Naive thymus-derived CD4-positive, alpha-beta T cell (primary cell): ENCODE measurements at regions of chr11 and their contacts with region 1.

Region 1: GRCh38 chr11:122796128-122796717 is 42.1 kb upstream of the CRTAM start:
- DNase-seq: peak; percentile 36 to 72 (median 64)
- ATAC-seq: peak; percentile 95
- H3K4me3 ChIP-seq: no peak overlapping the region
- H3K4me3 Mint-ChIP-seq: no peak overlapping the region
- H3K27ac ChIP-seq: no peak overlapping the region
- H3K27ac Mint-ChIP-seq: peak overlapping the region in 2 of 9 donors; percentile 41 to 42
- H3K4me1 ChIP-seq: no peaks in the 10 kb centered on the region
- H3K4me1 Mint-ChIP-seq: peaks cover 0 to 5% (median 0%) of the 10 kb centered on the region in 7 donors
- H3K27me3 ChIP-seq: no peaks in the 10 kb centered on the region
- H3K27me3 Mint-ChIP-seq: no peaks in the 10 kb centered on the region

Region 2: GRCh38 chr11:122584670-122585069 is 211.6 kb before region 1 on chr11:
- CTCF ChIA-PET with region 1: no interaction called
- POLR2A ChIA-PET with region 1: no interaction called
- intact Hi-C with region 1: loop called in 1 of 2 experiments (anchors 5 kb)
- DNase-seq: no peak
- ATAC-seq: no peak
- H3K4me3 ChIP-seq: no peak overlapping the region
- H3K4me3 Mint-ChIP-seq: no peak overlapping the region
- H3K27ac ChIP-seq: no peak overlapping the region
- H3K27ac Mint-ChIP-seq: no peak overlapping the region
- H3K4me1 ChIP-seq: no peaks in the 10 kb centered on the region
- H3K4me1 Mint-ChIP-seq: peaks cover 5 to 17% (median 11%) of the 10 kb centered on the region in 7 donors
- H3K27me3 ChIP-seq: no peaks in the 10 kb centered on the region
- H3K27me3 Mint-ChIP-seq: peaks cover 0 to 12% (median 5%) of the 10 kb centered on the region in 5 donors

Region 3: DNA sequence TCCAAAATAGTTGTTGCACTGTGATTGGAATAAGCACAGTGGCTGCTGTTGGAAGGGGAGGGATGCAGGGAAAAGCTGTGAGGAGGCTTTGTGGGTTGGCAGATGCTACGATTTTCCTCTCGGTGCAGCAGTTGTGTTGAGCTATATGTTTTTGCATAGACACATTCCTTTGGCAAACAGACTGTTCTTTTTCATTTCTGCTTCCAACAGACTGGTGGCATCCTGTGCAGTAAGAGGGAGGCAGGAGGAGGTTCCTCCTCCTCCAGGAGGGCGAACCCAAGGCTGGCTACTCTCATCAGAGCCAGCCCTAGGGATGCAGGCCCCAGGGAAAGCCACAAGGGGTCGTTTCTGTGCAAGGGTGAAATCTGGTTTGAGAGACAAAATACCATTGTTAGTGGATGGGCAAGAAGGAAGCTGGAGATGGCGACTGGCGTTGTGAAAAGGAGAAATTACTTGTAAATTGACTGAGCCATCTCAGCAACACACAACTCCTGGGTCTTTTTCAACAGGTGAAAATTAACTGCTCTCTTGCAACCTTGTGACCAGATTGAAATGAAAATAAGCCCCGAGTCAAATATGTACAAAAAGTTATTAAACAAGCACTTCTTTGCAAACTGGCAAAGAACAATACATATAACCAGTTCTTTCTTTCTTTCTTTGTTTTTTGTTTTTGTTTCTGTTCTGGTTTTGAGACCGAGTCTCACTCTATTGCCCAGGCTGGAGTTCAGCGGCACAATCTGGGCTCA is 167.2 kb before region 1 on chr11:
- CTCF ChIA-PET with region 1: interaction called, 3 read pairs
- POLR2A ChIA-PET with region 1: no interaction called
- intact Hi-C with region 1: loop called in 1 of 2 experiments (anchors 1 kb)
- DNase-seq: peak; percentile 46 to 70 (median 62)
- ATAC-seq: peak; percentile 93
- H3K4me3 ChIP-seq: no peak overlapping the region
- H3K4me3 Mint-ChIP-seq: no peak overlapping the region
- H3K27ac ChIP-seq: no peak overlapping the region
- H3K27ac Mint-ChIP-seq: peak overlapping the region in 4 of 9 donors; percentile 18 to 49 (median 24)
- H3K4me1 ChIP-seq: no peaks in the 10 kb centered on the region
- H3K4me1 Mint-ChIP-seq: peaks cover 0 to 30% (median 16%) of the 10 kb centered on the region in 7 donors
- H3K27me3 ChIP-seq: no peaks in the 10 kb centered on the region
- H3K27me3 Mint-ChIP-seq: peaks cover 0 to 16% (median 0%) of the 10 kb centered on the region in 5 donors

Region 4: GRCh38 chr11:122808478-122808869 is 12.3 kb after region 1 on chr11:
- CTCF ChIA-PET with region 1: interaction called, 24 read pairs
- POLR2A ChIA-PET with region 1: interaction called, 4 read pairs
- intact Hi-C with region 1: no loop called
- DNase-seq: peak in 1 of 9 donors; percentile 30
- ATAC-seq: no peak
- H3K4me3 ChIP-seq: no peak overlapping the region
- H3K4me3 Mint-ChIP-seq: peak overlapping the region in 3 of 10 donors; percentile 31 to 46 (median 46)
- H3K27ac ChIP-seq: no peak overlapping the region
- H3K27ac Mint-ChIP-seq: peak overlapping the region in 8 of 9 donors; percentile 19 to 82 (median 70)
- H3K4me1 ChIP-seq: peaks cover 0 to 14% of the 10 kb centered on the region in 2 donors
- H3K4me1 Mint-ChIP-seq: peaks cover 22 to 60% (median 41%) of the 10 kb centered on the region in 7 donors
- H3K27me3 ChIP-seq: no peaks in the 10 kb centered on the region
- H3K27me3 Mint-ChIP-seq: no peaks in the 10 kb centered on the region

Region 5: DNA sequence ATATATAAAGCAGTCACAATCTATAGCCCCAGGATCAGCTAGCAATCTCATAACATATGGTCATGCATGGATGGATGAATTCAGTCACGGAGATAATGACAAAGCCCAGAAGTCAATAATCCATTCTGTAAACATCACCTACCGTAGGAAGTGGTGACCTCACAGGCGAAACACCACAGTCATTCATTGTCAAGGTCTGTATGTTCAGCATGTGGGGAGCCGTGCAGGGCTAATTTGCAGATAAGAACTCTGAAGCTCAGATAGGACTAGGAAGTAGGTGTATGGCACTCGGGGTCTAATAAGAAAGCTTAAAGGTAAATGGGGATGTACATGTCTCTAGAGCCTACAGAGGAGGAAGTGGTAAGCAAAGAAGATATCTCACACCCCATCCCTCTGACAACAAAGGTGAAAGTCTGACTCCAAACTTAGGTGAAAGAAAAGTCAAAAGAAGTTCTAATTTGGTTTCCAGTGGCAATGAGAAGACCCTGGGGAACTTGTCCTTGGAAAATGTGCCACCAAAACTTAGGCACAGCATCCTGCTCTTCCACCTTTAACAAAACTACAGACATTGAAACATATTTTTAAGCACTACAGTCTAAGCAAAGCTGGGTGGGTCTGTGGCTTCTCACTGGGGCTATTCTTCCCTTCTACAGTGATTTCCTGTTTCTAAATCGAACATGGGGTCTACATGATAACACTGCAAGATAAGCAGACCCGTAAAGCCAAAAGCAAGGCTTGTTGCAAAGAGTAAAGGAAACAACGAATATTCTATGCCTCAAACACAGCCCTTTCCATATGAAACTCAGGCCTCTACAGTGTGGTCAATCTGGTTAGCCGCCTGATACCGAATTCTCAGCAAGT is 47.3 kb after region 1 on chr11:
- CTCF ChIA-PET with region 1: interaction called, 10 read pairs
- POLR2A ChIA-PET with region 1: interaction called, 5 read pairs
- intact Hi-C with region 1: no loop called
- DNase-seq: peak in 7 of 9 donors; percentile 48 to 69 (median 55)
- ATAC-seq: peak; percentile 92
- H3K4me3 ChIP-seq: peak overlapping the region; percentile 32
- H3K4me3 Mint-ChIP-seq: peak overlapping the region; percentile 38 to 82 (median 70)
- H3K27ac ChIP-seq: peak overlapping the region; percentile 59
- H3K27ac Mint-ChIP-seq: peak overlapping the region; percentile 84 to 97 (median 90)
- H3K4me1 ChIP-seq: peaks cover 30 to 73% of the 10 kb centered on the region in 2 donors
- H3K4me1 Mint-ChIP-seq: peaks cover 24 to 57% (median 48%) of the 10 kb centered on the region in 7 donors
- H3K27me3 ChIP-seq: no peaks in the 10 kb centered on the region
- H3K27me3 Mint-ChIP-seq: peaks cover 0 to 5% (median 0%) of the 10 kb centered on the region in 5 donors

Region 6: DNA sequence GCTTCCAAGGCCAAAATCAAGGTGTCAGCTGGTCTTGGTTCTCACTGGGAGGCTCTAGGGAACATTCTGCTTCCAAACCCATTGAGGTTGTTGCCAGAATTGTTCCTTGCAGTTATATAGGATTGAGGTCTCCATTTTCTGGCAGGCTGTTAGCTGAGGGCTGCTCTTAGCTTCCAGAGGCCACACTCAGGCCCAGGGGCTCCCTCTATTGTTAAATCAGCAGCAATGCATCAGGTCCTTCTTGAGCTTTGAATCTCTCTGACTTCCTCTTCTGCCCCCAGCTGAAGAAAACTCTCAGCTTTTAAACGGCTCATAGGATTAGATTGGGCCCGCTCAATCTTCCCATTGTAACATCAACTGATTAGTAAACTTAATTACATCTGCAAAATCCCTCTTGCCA is 224.7 kb after region 1 on chr11:
- CTCF ChIA-PET with region 1: interaction called, 7 read pairs
- POLR2A ChIA-PET with region 1: no interaction called
- intact Hi-C with region 1: loop called (anchors 1 to 5 kb)
- DNase-seq: peak in 5 of 9 donors; percentile 31 to 50 (median 37)
- ATAC-seq: peak; percentile 81
- H3K4me3 ChIP-seq: no peak overlapping the region
- H3K4me3 Mint-ChIP-seq: no peak overlapping the region
- H3K27ac ChIP-seq: no peak overlapping the region
- H3K27ac Mint-ChIP-seq: no peak overlapping the region
- H3K4me1 ChIP-seq: peaks cover 0 to 10% of the 10 kb centered on the region in 2 donors
- H3K4me1 Mint-ChIP-seq: peaks cover 6 to 14% (median 7%) of the 10 kb centered on the region in 7 donors
- H3K27me3 ChIP-seq: no peaks in the 10 kb centered on the region
- H3K27me3 Mint-ChIP-seq: peaks cover 6 to 25% (median 8%) of the 10 kb centered on the region in 5 donors

Region 7: GRCh38 chr11:123054301-123055065 is 258.3 kb after region 1 on chr11:
- CTCF ChIA-PET with region 1: interaction called, 4 read pairs
- POLR2A ChIA-PET with region 1: no interaction called
- intact Hi-C with region 1: loop called in 1 of 2 experiments (anchors 1 kb)
- DNase-seq: peak in 7 of 9 donors; percentile 52 to 75 (median 67)
- ATAC-seq: peak; percentile 87
- H3K4me3 ChIP-seq: peak overlapping the region; percentile 11
- H3K4me3 Mint-ChIP-seq: peak overlapping the region in 9 of 10 donors; percentile 20 to 100 (median 65)
- H3K27ac ChIP-seq: peak overlapping the region; percentile 38
- H3K27ac Mint-ChIP-seq: peak overlapping the region; percentile 69 to 100 (median 92)
- H3K4me1 ChIP-seq: peaks cover 50 to 56% of the 10 kb centered on the region in 2 donors
- H3K4me1 Mint-ChIP-seq: peaks cover 42 to 60% (median 55%) of the 10 kb centered on the region in 7 donors
- H3K27me3 ChIP-seq: no peaks in the 10 kb centered on the region
- H3K27me3 Mint-ChIP-seq: no peaks in the 10 kb centered on the region